ENCODE measurements at regions of chrX and their contacts with region 1.

Region 1: GRCh38 chrX:136711147-136711546 is 63.2 kb downstream of the CD40LG start:
- DNase-seq: peak; percentile 49
- H3K4me3 ChIP-seq: no peak overlapping the region
- H3K27ac ChIP-seq: no peak overlapping the region
- H3K4me1 ChIP-seq: peaks cover 12% of the 10 kb centered on the region
- H3K27me3 ChIP-seq: no peaks in the 10 kb centered on the region
- CTCF ChIP-seq: peak; percentile 53

Region 2: GRCh38 chrX:136736325-136737089 is 25.4 kb after region 1 on chrX:
- CTCF ChIA-PET with region 1: no interaction called
- POLR2A ChIA-PET with region 1: interaction called, 10 read pairs
- intact Hi-C with region 1: no loop called
- DNase-seq: peak; percentile 37
- H3K4me3 ChIP-seq: no peak overlapping the region
- H3K27ac ChIP-seq: no peak overlapping the region
- H3K4me1 ChIP-seq: peaks cover 14% of the 10 kb centered on the region
- H3K27me3 ChIP-seq: no peaks in the 10 kb centered on the region
- CTCF ChIP-seq: no peak

Region 3: GRCh38 chrX:136856551-136856950 is 145.4 kb after region 1 on chrX:
- CTCF ChIA-PET with region 1: no interaction called
- POLR2A ChIA-PET with region 1: no interaction called
- intact Hi-C with region 1: loop called (anchors 10 kb)
- DNase-seq: no peak
- H3K4me3 ChIP-seq: no peak overlapping the region
- H3K27ac ChIP-seq: no peak overlapping the region
- H3K4me1 ChIP-seq: no peaks in the 10 kb centered on the region
- H3K27me3 ChIP-seq: no peaks in the 10 kb centered on the region
- CTCF ChIP-seq: no peak

Measured in A673 (cell line).